ENCODE measurements at regions of chr10 and their contacts with region 1.

Region 1: GRCh38 chr10:397321-398075 is 262.2 kb downstream of the ZMYND11 start:
- DNase-seq: no peak

Region 2: DNA sequence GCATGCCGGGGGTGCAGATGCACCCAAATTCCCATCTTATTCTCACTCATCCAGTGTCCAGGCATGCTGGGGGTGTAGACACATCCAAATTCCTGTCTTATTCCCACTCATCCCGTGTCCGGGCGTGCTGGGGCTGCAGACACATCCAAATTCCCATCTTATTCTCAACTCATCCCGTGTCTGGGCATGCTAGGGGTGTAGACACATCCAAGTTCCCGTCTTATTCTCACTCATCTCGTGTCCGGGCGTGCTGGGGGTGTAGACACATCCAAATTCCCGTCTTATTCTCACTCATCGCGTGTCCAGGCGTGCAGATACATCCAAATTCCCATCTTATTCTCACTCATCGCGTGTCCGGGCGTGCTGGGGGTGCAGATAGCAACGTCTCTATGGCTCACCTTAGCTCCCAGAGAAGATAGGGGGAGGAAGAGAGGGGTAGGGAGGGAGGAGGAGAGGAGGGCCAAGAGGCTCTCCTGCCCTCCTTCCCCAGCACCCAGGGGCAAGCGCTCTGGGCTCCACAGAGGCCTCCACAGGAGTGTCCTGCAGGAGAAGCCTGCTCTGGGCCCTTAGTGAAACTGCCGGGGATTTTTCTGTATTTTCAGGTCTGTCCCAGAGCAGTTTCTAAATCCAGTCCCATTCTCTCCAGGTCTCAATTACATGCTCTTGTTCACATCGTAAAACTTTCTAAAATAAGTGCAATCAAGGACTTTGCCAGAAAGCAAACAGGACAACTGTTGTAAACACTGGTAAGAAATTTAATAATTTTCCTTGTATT is 81.2 kb after region 1 on chr10:
- intact Hi-C with region 1: no loop called
- DNase-seq: peak in 3 of 10 donors; percentile 24 to 53 (median 52)

Region 3: DNA sequence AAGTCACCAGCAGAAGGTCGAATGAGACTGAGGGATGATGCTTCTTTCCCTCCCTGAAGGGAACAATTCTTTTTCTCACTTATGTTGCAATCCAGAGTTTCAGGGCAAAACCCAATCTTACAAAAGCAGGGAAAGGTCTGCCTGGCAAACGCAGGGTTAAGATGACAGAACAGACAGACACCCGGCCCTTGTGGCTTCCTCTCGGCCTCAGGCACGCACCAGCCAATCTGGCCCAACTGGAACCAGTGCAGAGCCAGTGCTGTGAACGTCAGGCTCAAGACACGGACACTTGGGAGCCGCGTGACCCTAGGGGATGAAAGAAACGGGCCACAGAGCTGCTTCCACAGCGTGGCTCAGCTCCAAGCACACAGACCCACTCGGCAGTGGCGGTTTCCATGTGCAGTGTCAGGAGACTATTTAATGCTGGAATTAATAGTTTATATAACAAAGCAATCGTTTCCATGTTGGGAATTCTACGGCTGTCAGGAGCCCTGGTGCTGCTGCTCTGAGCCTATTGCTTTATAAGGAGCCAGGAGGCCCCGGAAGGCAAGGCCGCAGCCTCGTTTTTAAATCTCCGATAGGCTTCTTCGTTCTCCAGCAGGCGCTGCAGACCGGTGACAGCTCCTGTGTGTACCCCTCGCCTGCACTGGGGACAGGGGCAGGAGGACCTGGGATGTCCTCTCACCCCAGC is 93.5 kb after region 1 on chr10:
- intact Hi-C with region 1: loop called (anchors 10 kb)
- DNase-seq: peak in 4 of 10 donors; percentile 60 to 87 (median 80)